Activated naive CD4-positive, alpha-beta T cell treated with anti-CD3 and anti-CD28 coated beads, Interleukin-2, amount 10 ng/mL, durations not matched to agents 7 days and 5 days (primary cell): ENCODE measurements at regions of chr15 and their contacts with region 1.

Region 1: GRCh38 chr15:74768771-74769342 is 13.0 kb upstream of the CSK start:
- DNase-seq: peak; percentile 81
- H3K4me3 Mint-ChIP-seq: no peak overlapping the region
- H3K27ac Mint-ChIP-seq: no peak overlapping the region
- H3K4me1 Mint-ChIP-seq: peaks cover 39% of the 10 kb centered on the region
- H3K27me3 Mint-ChIP-seq: peaks cover 28% of the 10 kb centered on the region

Region 2: GRCh38 chr15:74615508-74616365 is 153.1 kb before region 1 on chr15 and contains the start of gene CLK3:
- CTCF ChIA-PET with region 1: interaction called, 21 read pairs
- DNase-seq: peak; percentile 97
- H3K4me3 Mint-ChIP-seq: peak within 1 kb of the TSS; percentile 93
- H3K27ac Mint-ChIP-seq: peak within 1 kb of the TSS; percentile 99
- H3K4me1 Mint-ChIP-seq: peaks cover 49% of the 10 kb centered on the region
- H3K27me3 Mint-ChIP-seq: peaks cover 25% of the 10 kb centered on the region

Region 3: GRCh38 chr15:74635228-74635627 is 133.6 kb before region 1 on chr15:
- CTCF ChIA-PET with region 1: interaction called, 347 read pairs
- DNase-seq: peak; percentile 83
- H3K4me3 Mint-ChIP-seq: no peak overlapping the region
- H3K27ac Mint-ChIP-seq: no peak overlapping the region
- H3K4me1 Mint-ChIP-seq: peaks cover 4% of the 10 kb centered on the region
- H3K27me3 Mint-ChIP-seq: no peaks in the 10 kb centered on the region

Region 4: DNA sequence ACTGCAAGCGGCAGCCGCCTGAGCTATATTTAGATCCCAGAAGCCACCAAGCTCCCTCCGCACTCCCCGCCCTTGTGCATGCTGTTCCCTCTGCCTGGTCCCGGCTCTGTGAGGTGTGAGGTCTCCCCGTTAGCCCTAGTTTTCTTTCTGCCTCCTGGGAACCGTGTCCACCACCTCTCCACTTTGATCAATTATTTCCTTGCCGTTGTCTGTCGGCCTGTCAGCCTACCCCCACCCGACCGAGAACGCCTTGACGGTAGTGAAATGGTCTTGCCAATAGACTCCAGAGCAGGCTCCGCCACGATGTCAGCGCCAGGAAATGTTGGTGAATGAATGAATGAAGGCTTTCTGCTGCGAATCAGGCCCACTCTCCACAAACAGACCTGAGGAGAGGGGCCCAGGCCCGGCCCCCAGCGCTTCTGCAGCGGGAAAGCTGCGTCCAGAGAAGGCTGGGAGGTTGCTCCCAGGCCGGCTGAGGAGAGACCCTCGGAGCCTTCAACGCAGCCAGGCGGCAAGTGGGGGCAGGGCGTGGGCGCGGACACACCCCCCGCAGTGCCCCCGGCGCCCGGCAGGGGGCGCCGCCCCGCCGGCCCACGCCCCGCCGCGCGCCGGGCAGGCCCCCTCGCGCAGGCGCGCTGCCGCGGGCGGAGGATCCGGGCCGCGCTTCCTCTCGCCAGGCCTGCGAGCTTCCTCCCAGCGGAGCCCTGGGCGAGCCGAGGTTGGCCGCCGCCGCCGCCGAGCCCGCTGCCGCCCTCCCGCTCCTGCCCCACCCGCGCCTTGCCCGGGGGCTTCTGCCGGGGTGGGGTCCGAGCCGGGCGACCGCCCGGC is 12.8 kb after region 1 on chr15 and contains the start of gene CSK:
- CTCF ChIA-PET with region 1: interaction called, 880 read pairs
- DNase-seq: peak; percentile 80
- H3K4me3 Mint-ChIP-seq: peak within 1 kb of the TSS; percentile 91
- H3K27ac Mint-ChIP-seq: peak within 1 kb of the TSS; percentile 99
- H3K4me1 Mint-ChIP-seq: peaks cover 62% of the 10 kb centered on the region
- H3K27me3 Mint-ChIP-seq: no peaks in the 10 kb centered on the region

Region 5: DNA sequence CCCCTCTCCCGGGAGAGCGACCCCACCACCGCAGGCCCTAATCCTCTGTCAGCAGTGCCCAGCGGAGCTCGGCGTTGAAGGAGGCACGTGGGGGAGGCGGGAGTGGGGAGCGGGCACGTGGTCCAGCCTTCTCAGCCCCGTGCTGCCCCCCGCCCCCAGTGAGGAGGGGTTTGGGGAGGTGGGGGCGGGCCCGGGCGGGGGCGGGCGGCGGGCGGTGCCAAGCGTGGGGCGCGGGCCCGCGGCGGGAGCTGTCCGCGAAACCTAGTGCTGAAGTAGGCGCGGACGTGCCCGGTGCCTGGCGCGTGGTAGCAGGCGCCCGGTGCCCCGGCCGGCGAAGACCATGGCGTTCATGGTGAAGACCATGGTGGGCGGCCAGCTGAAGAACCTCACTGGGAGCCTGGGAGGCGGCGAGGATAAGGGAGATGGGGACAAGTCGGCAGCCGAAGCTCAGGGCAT is 57.5 kb after region 1 on chr15 and contains the start of gene CPLX3:
- CTCF ChIA-PET with region 1: interaction called, 11 read pairs
- DNase-seq: peak; percentile 76
- H3K4me3 Mint-ChIP-seq: no peak within 1 kb of the TSS
- H3K27ac Mint-ChIP-seq: no peak within 1 kb of the TSS
- H3K4me1 Mint-ChIP-seq: peaks cover 2% of the 10 kb centered on the region
- H3K27me3 Mint-ChIP-seq: peaks cover 87% of the 10 kb centered on the region

Region 6: GRCh38 chr15:74906446-74907162 is 137.7 kb after region 1 on chr15 and contains the start of gene FAM219B:
- CTCF ChIA-PET with region 1: interaction called, 73 read pairs
- DNase-seq: peak; percentile 85
- H3K4me3 Mint-ChIP-seq: peak within 1 kb of the TSS; percentile 99
- H3K27ac Mint-ChIP-seq: peak within 1 kb of the TSS; percentile 94
- H3K4me1 Mint-ChIP-seq: peaks cover 44% of the 10 kb centered on the region
- H3K27me3 Mint-ChIP-seq: no peaks in the 10 kb centered on the region